Mammary epithelial cell (primary cell): ENCODE measurements at regions of chr20 and their contacts with region 1.

Region 1: DNA sequence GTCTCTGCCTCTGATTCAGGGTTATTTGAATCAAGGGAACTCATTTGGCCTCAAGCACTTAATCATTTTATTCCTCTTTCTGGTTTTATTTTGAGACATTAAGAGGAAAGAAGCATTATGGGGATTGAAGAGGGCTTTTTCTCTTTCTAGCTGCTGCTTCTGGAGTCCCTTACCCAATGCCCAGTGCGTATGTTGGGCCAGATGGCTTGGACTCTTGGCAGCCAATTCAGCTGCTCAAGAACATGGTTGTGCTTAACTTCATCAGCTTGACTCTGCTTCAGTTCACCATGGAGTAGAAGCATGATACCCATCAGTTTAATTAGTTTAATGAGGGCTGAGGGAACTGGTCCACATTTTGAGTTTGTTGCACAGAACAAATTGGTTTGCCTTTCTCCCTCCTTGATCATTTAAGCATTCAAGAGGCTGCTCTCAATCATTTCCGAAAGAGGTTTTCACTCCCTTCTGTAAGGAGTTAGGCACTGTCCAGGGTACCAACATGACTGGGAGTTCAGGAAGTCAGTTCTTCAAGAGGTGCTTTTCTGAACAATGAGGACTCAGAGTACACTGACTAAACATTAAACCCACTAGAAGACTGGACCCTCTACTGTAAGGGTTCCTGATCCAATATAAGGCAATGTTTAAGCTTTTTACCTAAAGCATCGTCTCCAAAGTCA is 14.6 kb downstream of the PDYN start:
- DNase-seq: no peak
- H3K4me3 ChIP-seq: no peak overlapping the region
- H3K27ac ChIP-seq: no peak overlapping the region
- H3K4me1 ChIP-seq: no peaks in the 10 kb centered on the region
- H3K27me3 ChIP-seq: no peaks in the 10 kb centered on the region
- CTCF ChIP-seq: no peak

Region 2: DNA sequence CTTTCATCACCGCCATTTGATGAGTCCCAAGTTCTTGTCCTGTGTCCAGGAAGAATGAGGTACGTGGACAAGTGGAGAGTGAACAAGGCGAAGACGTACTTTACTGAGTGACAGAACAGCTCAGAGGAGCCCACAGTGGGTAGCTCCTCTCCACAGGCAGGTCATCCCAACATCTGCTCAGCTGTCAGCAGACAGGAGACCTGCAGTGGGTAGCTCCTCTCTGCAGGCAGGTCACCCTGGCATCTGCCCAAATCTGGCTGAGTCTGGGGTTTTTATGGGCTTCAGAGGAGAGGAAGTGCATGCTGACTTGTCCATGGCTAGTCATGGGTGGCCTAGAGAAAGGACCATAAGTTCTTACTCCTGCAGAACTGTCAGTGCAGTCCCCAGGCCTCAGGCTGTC is 47.3 kb after region 1 on chr20:
- CTCF ChIA-PET with region 1: no interaction called
- dilution Hi-C with region 1: loop called (anchors 5 kb)
- in situ Hi-C with region 1: no loop called
- intact Hi-C with region 1: no loop called
- DNase-seq: no peak
- H3K4me3 ChIP-seq: no peak overlapping the region
- H3K27ac ChIP-seq: no peak overlapping the region
- H3K4me1 ChIP-seq: peaks cover 7% of the 10 kb centered on the region
- H3K27me3 ChIP-seq: peaks cover 5% of the 10 kb centered on the region
- CTCF ChIP-seq: no peak

Region 3: DNA sequence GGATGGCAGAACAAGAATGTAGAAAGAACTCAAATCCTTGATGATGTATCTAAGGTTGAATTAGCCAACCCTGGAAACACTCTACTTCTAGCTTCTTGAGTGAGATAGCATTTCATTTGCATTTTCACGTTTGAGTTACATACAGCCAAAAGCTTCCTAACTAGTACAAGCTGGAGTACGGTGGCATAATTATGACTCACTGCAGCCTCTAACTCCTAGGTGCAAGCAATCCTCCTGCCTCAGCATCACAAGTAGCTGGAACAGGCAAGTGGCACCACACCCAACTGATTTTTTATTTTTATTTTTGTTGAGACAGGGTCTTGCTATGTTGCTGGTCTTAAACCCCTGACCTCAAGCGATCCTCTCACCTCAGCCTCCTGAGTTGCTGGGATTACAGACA is 85.9 kb after region 1 on chr20:
- CTCF ChIA-PET with region 1: no interaction called
- dilution Hi-C with region 1: no loop called
- in situ Hi-C with region 1: no loop called
- intact Hi-C with region 1: no loop called
- DNase-seq: peak; percentile 10
- H3K4me3 ChIP-seq: no peak overlapping the region
- H3K27ac ChIP-seq: no peak overlapping the region
- H3K4me1 ChIP-seq: no peaks in the 10 kb centered on the region
- H3K27me3 ChIP-seq: no peaks in the 10 kb centered on the region
- CTCF ChIP-seq: no peak

Region 4: GRCh38 chr20:2172305-2173175 is 193.3 kb after region 1 on chr20:
- CTCF ChIA-PET with region 1: no interaction called
- dilution Hi-C with region 1: no loop called
- in situ Hi-C with region 1: no loop called
- intact Hi-C with region 1: no loop called
- DNase-seq: peak; percentile 23
- H3K4me3 ChIP-seq: no peak overlapping the region
- H3K27ac ChIP-seq: no peak overlapping the region
- H3K4me1 ChIP-seq: no peaks in the 10 kb centered on the region
- H3K27me3 ChIP-seq: no peaks in the 10 kb centered on the region
- CTCF ChIP-seq: peak; percentile 85 to 94